ENCODE measurements at regions of chr10 and their contacts with region 1.

Region 1: DNA sequence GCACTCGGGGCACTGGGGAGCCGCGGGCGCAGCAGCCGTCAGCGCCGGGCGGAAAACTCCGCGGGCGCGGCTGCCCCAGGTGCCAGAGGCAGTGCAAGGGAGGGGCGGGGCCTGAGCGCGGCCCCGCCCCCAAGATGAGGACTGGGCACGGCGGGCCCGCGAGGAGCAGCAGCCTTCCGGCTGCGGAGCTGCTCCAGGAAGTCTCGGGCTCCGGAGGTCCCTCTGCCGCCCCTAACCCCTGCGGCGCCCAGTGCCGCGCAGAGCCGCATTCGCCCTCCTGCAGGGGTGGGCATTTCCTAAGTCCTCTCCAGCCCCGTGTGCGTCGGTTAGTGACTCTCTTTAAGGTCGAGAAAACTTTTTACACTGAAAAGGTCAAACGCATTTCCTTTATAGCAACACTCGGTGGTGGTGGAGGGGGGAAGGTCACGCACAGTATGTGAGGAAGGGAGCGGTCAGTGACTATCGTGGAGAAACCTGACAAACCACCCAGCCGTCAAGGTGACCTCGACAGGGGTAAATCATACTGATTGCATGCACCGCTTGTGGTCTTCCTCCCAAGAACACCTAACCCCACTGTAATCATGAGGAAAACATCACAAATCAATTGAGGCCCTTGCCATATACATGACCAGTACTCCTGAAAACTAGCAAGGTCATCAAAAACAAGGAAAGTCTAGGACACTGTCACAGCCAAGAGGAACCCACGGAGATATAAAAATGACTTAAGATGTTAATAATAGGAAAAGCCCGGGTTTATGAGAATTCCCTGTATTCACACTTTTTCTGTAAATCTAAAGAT is at the start of gene ANXA11:
- DNase-seq: peak; percentile 94
- ATAC-seq: peak; percentile 81
- total RNA-seq, gene ANXA11: 420 TPM

Region 2: DNA sequence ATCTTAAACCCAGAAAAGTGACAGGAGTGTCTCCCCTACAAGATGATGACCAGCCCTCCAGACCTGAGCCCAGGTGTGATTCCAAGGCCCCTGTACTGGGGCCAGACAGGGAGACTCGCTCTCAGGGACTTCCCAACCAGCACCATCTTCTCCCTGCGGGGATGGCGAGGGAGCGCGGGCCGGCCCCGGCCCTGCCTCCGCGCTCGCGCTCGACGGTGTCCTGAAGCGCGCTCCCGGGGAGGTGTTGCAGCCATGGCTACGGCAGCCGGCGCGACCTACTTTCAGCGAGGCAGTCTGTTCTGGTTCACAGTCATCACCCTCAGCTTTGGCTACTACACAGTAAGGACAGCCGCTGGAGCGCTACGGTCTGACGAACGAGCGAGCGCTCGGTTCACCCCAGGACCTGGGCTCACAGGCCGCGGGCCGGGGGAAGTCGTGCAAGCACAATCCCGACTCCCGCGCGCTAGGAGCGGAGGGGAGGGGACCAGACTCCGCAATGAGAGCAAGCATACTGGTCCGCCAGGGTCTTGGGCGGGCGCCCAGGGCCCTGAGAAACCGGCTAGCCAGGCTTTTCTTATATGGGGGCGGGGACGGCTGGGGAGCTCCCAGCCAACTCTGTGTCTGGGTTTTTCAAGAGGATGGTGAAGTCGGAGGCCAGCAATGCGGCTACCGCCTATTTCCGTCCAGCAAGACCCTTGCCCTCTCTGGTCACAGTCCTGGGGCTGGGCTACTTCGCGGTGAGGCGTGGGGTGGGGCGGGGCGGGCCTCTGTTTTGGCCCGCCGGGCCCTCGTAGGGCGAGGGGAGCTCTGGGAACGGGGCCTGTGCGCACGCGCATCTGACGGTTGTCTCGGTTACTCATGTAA is 127.0 kb before region 1 on chr10 and contains the start of gene TMEM254:
- intact Hi-C with region 1: loop called (anchors 5 kb)
- DNase-seq: peak; percentile 96
- ATAC-seq: peak; percentile 97
- total RNA-seq, gene TMEM254: 9.7 TPM

Region 3: DNA sequence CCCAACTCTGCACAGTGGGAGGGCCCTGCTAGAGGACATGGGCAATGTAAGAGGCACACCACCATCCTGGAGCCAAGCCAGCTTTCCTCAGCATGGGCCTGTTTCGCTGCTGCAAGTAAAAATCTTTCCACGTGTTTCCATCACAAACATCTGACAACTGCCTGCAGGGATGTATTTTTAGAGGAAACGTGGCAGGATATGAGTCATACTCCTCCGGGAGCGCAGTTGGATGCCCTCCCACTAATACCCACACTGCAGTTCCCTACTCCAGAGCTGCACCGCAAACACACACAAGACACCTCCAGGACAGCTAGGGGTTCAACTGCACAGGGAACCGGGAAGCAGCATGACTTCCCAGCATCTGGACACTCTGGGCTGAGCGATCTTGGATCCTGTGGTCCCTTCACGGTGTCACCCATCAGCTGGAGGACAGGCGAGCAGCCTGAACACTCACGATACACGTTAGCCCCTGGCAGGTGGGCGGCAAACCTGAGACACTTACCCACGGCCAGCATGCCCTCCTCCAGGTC is 47.0 kb before region 1 on chr10:
- intact Hi-C with region 1: loop called (anchors 1 kb)
- DNase-seq: peak; percentile 90
- ATAC-seq: peak; percentile 92

Region 4: DNA sequence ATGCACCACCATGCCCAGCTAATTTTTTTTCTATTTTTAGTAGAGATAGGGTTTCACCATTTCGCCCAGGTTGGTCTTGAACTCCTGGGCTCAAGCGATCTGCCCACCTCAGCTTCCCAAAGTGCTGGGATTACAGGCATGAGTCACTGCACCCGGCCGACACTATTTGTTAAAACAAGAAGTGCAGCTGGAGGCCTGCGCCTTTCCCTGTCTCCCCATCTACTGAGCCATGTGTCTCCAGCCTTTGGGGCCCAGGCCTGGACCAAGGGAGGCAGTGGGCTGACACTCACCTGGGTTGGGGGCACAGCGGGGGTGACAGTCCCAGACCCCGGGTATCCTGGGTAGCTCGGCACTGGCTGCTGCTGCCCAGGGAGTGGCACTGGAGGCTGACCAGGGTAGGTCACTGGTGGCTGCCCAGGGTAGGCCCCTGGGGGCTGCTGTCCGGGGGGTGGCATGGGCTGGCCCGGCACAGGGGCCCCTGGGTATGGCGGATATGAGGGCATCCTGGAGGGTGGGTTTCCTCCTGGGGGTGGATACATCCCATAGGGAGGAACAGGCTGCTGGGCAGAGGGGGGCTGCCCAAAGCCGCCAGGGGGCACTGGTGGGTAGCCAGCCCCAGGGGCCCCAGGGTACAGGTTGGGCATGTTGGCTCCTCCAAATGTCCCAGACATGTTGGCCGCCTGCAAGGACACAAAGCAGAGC is 36.8 kb before region 1 on chr10:
- intact Hi-C with region 1: loop called (anchors 2 kb)
- DNase-seq: no peak
- ATAC-seq: peak; percentile 20

Region 5: GRCh38 chr10:80186477-80186944 is 19.2 kb before region 1 on chr10:
- intact Hi-C with region 1: loop called (anchors 1 kb)
- DNase-seq: peak; percentile 68
- ATAC-seq: peak; percentile 84